G401 (cell line): ENCODE measurements at regions of chr3 and their contacts with region 1.

Region 1: GRCh38 chr3:32825601-32826375 is 8.0 kb downstream of the TRIM71 start:
- DNase-seq: no peak

Region 2: DNA sequence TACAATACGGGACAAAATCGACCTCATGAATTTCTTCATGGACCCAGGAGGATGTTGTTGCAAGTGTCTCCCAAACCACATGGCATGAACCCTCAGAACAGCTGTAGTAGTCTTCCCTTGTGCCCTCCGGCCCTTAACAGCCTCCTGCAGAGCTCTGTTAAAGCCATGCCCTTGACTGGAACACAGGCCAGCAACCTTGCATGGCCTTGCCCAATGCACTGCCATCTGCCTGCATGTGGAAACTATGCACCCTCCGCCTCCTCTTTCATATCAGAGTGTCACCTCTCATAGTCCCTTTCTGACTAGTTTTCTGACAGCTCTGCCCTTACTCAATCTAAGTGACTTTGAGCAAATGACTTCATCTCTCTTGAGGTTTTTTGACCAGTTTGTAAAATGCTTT is 47.4 kb before region 1 on chr3:
- in situ Hi-C with region 1: loop called (anchors 5 kb)
- DNase-seq: no peak

Region 3: DNA sequence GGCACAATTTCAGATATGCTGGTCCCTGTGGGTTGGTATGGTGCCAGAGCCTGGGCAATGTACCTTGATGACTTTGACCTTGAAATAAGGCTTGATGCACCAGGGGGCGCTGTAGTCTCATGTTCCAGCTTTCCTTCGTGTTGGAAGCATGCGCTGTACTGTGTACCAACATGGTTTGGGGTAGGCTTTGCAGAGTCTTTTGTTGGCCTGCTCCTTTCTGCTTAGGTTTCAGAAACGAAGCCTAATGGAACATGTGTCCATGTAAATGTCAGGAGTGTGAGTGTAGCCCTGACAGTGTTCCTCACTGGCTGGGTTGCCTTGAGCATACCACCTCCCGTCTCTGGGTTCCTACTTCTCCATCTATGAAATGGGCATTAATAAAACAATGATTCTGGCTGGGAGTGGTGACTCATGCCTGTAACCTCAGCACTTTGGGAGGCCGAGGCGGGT is 122.0 kb after region 1 on chr3:
- in situ Hi-C with region 1: no loop called
- DNase-seq: peak; percentile 49